ENCODE measurements at regions of chr5 and their contacts with region 1.

Region 1: GRCh38 chr5:149561848-149562247 is 10.6 kb upstream of the CSNK1A1 start:
- DNase-seq: no peak
- ATAC-seq: peak; percentile 81
- H3K4me3 Mint-ChIP-seq: no peak overlapping the region
- H3K27ac Mint-ChIP-seq: peak overlapping the region; percentile 40
- H3K4me1 Mint-ChIP-seq: peaks cover 24% of the 10 kb centered on the region
- H3K27me3 Mint-ChIP-seq: no peaks in the 10 kb centered on the region
- CTCF ChIP-seq: no peak

Region 2: DNA sequence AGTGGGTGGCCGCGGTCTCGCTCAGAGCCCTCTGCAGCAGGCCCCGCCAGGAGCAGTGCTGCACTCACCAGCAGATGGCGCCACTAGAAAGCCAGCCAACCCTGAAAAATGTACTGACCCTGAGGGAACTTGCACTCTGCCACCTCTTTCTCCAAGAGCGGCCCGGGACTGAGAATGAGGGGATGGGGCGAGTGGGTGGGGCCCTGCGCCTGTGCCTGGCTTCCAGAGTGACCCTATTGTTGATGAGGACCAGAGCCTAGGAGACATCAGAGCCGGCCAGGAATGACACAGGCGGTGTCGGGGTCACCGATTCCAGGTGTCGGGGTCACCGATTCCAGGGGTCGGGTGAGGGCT is 179.9 kb before region 1 on chr5:
- CTCF ChIA-PET with region 1: interaction called, 37 read pairs
- POLR2A ChIA-PET with region 1: no interaction called
- intact Hi-C with region 1: loop called (anchors 2 kb)
- DNase-seq: peak; percentile 80
- ATAC-seq: peak; percentile 93
- H3K4me3 Mint-ChIP-seq: no peak overlapping the region
- H3K27ac Mint-ChIP-seq: no peak overlapping the region
- H3K4me1 Mint-ChIP-seq: peaks cover 4% of the 10 kb centered on the region
- H3K27me3 Mint-ChIP-seq: no peaks in the 10 kb centered on the region
- CTCF ChIP-seq: peak; percentile 80

Region 3: GRCh38 chr5:149551200-149552037 is 10.4 kb before region 1 on chr5 and contains the start of gene CSNK1A1:
- CTCF ChIA-PET with region 1: interaction called, 21 read pairs
- POLR2A ChIA-PET with region 1: interaction called, 19 read pairs
- intact Hi-C with region 1: no loop called
- DNase-seq: peak; percentile 99
- ATAC-seq: peak; percentile 90
- H3K4me3 Mint-ChIP-seq: peak within 1 kb of the TSS; percentile 96
- H3K27ac Mint-ChIP-seq: peak within 1 kb of the TSS; percentile 99
- H3K4me1 Mint-ChIP-seq: peaks cover 23% of the 10 kb centered on the region
- H3K27me3 Mint-ChIP-seq: no peaks in the 10 kb centered on the region
- CTCF ChIP-seq: peak; percentile 70
- total RNA-seq, gene CSNK1A1: 154 to 168 TPM

Region 4: DNA sequence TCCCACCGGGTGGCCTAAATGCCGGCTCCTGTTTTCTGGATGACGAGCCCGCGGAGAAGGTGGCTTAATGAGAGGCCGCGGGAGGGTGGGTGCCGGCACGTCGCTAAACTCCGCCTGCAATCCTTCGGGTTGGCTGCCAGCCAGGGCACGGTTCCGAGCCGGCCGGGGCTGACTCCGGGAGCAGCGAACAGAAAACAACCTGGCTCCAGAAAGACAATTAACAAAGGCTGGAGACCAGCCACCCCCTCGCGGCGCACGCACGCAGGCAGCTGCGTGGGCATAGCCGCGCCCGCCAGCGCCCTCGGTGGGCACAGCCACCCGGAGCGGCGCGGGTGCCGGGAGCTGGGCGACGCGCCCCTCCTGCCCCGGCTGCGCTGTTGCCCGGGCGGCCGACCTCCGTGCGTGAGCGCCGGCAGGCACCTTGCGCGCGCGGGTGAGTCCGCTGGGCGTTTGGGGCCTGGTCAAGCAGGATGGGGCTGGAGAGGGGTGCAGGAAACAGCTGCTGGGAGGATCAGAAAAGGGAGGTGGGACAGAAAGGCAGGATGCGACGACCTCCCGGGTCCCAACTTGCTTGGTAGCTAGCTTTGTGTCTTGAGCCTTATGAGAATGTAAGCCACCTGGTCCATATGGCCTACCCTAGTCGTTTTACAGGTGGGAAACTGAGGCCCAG is 19.5 kb after region 1 on chr5 and contains the start of gene ARHGEF37:
- CTCF ChIA-PET with region 1: interaction called, 14 read pairs
- POLR2A ChIA-PET with region 1: no interaction called
- intact Hi-C with region 1: no loop called
- DNase-seq: peak; percentile 66
- ATAC-seq: peak; percentile 77
- H3K4me3 Mint-ChIP-seq: peak within 1 kb of the TSS; percentile 72
- H3K27ac Mint-ChIP-seq: peak within 1 kb of the TSS; percentile 34
- H3K4me1 Mint-ChIP-seq: peaks cover 16% of the 10 kb centered on the region
- H3K27me3 Mint-ChIP-seq: peaks cover 16% of the 10 kb centered on the region
- CTCF ChIP-seq: no peak
- total RNA-seq, gene ARHGEF37: 1.1 TPM

Measured in activated CD8-positive, alpha-beta T cell treated with anti-CD3 and anti-CD28 coated beads for 36 hours (primary cell).